ENCODE measurements at regions of chr12 and their contacts with region 1.

Region 1: GRCh38 chr12:131104463-131105350 is 151.0 kb downstream of the ADGRD1 start:
- DNase-seq: no peak
- H3K4me3 ChIP-seq: no peak overlapping the region
- H3K27ac ChIP-seq: peak overlapping the region in 2 of 4 donors; percentile 9 to 17
- H3K4me1 ChIP-seq: peaks cover 3 to 19% (median 7%) of the 10 kb centered on the region in 3 donors
- H3K27me3 ChIP-seq: peaks cover 0 to 21% (median 0%) of the 10 kb centered on the region in 4 donors
- CTCF ChIP-seq: peak; percentile 72 to 92 (median 88)
- POLR2A ChIP-seq: no peak

Region 2: DNA sequence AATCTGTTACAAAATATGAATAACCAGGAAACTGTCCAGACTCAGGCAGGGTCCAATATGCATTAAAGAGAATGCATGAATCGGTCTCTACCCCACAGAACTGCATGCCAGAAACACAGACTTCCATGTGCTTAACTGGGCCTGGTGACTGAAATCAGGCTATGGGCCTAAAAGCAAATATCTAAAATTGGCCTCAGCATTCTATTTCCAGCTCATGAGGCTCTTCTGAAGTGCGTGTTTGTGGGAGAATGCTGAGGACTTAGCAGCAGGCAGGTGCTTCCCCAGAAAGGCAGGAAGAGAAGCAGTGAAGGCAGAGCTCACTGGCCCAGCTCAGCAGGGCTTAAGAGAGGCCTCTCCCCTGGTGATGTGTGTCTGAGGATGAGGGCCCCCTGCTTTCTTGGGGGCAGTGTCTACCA is 102.5 kb before region 1 on chr12:
- intact Hi-C with region 1: no loop called
- DNase-seq: no peak
- H3K4me3 ChIP-seq: no peak overlapping the region
- H3K27ac ChIP-seq: peak overlapping the region in 2 of 4 donors; percentile 3 to 21
- H3K4me1 ChIP-seq: peaks cover 0 to 8% (median 0%) of the 10 kb centered on the region in 3 donors
- H3K27me3 ChIP-seq: peaks cover 0 to 14% (median 0%) of the 10 kb centered on the region in 4 donors
- CTCF ChIP-seq: no peak
- POLR2A ChIP-seq: no peak

Region 3: GRCh38 chr12:131827961-131828534 is 723.3 kb after region 1 on chr12 and contains the start of gene MMP17:
- intact Hi-C with region 1: loop called (anchors 10 kb)
- DNase-seq: no peak
- H3K4me3 ChIP-seq: peak within 1 kb of the TSS; percentile 36 to 67 (median 48)
- H3K27ac ChIP-seq: peak within 1 kb of the TSS in 2 of 4 donors; percentile 13 to 18
- H3K4me1 ChIP-seq: peaks cover 32 to 67% (median 43%) of the 10 kb centered on the region in 3 donors
- H3K27me3 ChIP-seq: peaks cover 0 to 87% (median 9%) of the 10 kb centered on the region in 4 donors
- CTCF ChIP-seq: no peak
- POLR2A ChIP-seq: peak in 1 of 4 donors; percentile 24
- total RNA-seq, gene MMP17: 1.3 to 3.1 (median 1.9) TPM

Measured in esophagus squamous epithelium (tissue), 5 donors.